B cell (primary cell): ENCODE measurements at regions of chr2 and their contacts with region 1.

Region 1: GRCh38 chr2:25276569-25277465 is 64.9 kb downstream of the DNMT3A start:
- DNase-seq: peak; percentile 89
- ATAC-seq: peak; percentile 35
- H3K4me3 ChIP-seq: peak overlapping the region in 4 of 5 experiments; percentile 46 to 60 (median 56)
- H3K4me3 Mint-ChIP-seq: peak overlapping the region; percentile 79
- H3K27ac ChIP-seq: peak overlapping the region; percentile 94 to 96
- H3K27ac Mint-ChIP-seq: peak overlapping the region; percentile 94
- H3K4me1 ChIP-seq: peaks cover 79 to 92% of the 10 kb centered on the region in 2 donors
- H3K4me1 Mint-ChIP-seq: peaks cover 78% of the 10 kb centered on the region
- H3K27me3 ChIP-seq: no peaks in the 10 kb centered on the region
- H3K27me3 Mint-ChIP-seq: no peaks in the 10 kb centered on the region
- CTCF ChIP-seq: peak; percentile 83

Region 2: DNA sequence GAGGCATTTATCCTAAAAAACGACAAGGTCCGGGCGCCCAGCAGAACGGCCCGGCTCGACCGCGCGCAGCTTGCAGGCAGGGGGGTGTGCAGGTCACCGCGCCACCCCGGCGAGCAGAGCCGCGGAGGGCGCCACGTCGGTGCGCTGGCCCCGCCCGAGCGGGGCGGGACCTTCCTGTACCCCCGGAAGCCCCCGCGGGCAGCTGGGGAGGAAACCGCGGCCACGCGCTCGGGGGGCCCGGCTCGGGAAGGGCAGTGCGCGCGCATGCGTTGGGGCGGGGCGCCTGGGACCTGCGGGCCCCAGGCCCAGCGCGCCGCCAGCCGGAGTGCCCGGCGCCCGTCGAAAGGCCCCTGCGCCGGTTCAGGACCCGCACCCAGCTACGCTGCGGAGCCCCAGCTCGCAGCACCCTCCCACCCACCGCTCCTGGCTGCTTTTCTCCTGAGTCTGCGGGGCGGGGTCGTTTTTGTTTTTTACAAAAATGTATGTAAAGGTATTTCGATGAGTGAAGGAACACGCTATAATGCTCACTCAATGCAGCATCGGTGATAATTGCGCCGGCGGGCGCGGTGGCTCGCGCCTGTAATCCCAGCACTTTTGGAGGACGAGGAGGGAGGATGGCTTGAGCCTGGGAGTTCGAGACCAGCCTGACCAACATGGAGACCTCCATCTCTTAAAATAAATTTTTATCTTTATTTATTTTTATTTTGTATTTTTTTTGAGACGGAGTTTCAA is 60.7 kb before region 1 on chr2:
- CTCF ChIA-PET with region 1: no interaction called
- POLR2A ChIA-PET with region 1: interaction called, 4 read pairs
- intact Hi-C with region 1: loop called (anchors 2 kb)
- DNase-seq: peak; percentile 90
- ATAC-seq: peak; percentile 94
- H3K4me3 ChIP-seq: peak overlapping the region; percentile 45 to 71 (median 61)
- H3K4me3 Mint-ChIP-seq: peak overlapping the region; percentile 77
- H3K27ac ChIP-seq: peak overlapping the region; percentile 50 to 68
- H3K27ac Mint-ChIP-seq: peak overlapping the region; percentile 83
- H3K4me1 ChIP-seq: peaks cover 8 to 29% of the 10 kb centered on the region in 2 donors
- H3K4me1 Mint-ChIP-seq: peaks cover 30% of the 10 kb centered on the region
- H3K27me3 ChIP-seq: no peaks in the 10 kb centered on the region
- H3K27me3 Mint-ChIP-seq: no peaks in the 10 kb centered on the region
- CTCF ChIP-seq: no peak

Region 3: DNA sequence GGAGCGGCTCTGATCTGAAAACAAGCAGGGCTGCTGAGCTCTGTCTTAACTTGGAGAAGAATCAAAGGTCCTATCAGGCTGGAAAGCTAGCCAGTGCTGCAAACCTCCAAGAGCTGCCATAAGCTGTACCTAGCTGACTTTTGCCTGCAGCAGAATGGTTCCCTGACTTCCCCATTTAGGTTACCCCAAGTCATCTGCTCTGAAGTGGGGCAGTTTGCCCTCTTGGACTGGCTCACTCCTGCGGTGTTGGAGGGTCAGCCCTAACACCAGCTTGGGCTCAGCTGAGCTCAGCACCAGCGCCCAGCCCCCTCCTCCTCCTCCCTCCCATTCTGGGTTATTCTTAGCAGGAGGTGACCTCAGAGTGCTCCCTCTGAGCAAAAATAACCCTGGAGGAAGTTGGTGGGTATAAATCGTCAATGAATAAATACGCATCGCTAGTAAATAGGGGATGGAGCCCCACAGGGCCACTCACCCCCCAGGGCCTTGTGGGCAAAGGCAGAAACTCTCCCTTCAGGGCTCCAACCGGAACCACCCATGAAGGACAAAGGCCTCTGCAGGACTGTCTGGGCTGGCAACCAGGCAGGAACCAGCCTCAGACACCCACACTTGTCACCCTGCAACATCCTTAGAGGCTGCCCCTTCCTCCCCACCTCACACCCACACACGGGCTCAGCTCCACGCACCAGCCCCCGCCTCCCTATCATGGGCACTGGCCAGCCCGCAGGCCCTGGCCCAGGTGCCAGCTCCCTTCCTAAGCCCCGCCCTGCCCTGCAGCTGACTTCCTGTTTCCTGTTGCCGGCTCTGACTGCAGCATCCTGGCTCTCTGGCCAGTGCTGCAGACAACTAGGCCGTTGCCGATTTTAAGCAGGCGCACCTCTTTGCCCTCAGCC is 18.0 kb after region 1 on chr2:
- CTCF ChIA-PET with region 1: interaction called, 11 read pairs
- POLR2A ChIA-PET with region 1: interaction called, 10 read pairs
- intact Hi-C with region 1: loop called (anchors 1 kb)
- DNase-seq: peak; percentile 81
- ATAC-seq: peak; percentile 81
- H3K4me3 ChIP-seq: peak overlapping the region in 4 of 5 experiments; percentile 6 to 45 (median 26)
- H3K4me3 Mint-ChIP-seq: peak overlapping the region; percentile 80
- H3K27ac ChIP-seq: peak overlapping the region; percentile 87 to 91
- H3K27ac Mint-ChIP-seq: peak overlapping the region; percentile 94
- H3K4me1 ChIP-seq: peaks cover 41 to 61% of the 10 kb centered on the region in 2 donors
- H3K4me1 Mint-ChIP-seq: peaks cover 43% of the 10 kb centered on the region
- H3K27me3 ChIP-seq: no peaks in the 10 kb centered on the region
- H3K27me3 Mint-ChIP-seq: no peaks in the 10 kb centered on the region
- CTCF ChIP-seq: no peak

Region 4: DNA sequence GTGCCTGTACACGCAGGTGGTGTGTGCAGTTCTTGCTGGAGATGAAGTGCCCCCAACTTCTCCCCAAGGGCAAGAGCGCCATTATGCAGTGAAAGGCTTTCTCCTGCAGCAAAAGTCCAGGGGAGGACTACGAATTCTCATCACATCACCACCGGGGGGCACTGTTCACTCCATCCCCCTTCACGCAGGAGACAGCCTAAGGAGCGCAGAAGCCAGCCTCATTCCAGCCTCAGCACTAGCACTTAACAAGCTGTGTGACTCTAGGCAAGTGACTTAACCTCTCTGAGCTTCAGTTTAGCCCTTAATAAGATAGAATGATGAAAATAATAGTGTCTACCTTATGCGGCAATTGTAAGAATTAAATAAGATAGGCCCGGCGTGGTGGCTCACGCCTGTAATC is 32.6 kb after region 1 on chr2:
- CTCF ChIA-PET with region 1: interaction called, 13 read pairs
- POLR2A ChIA-PET with region 1: no interaction called
- intact Hi-C with region 1: no loop called
- DNase-seq: peak; percentile 75
- ATAC-seq: peak; percentile 63
- H3K4me3 ChIP-seq: no peak overlapping the region
- H3K4me3 Mint-ChIP-seq: no peak overlapping the region
- H3K27ac ChIP-seq: no peak overlapping the region
- H3K27ac Mint-ChIP-seq: no peak overlapping the region
- H3K4me1 ChIP-seq: peaks cover 5% of the 10 kb centered on the region in 2 donors
- H3K4me1 Mint-ChIP-seq: peaks cover 20% of the 10 kb centered on the region
- H3K27me3 ChIP-seq: no peaks in the 10 kb centered on the region
- H3K27me3 Mint-ChIP-seq: no peaks in the 10 kb centered on the region
- CTCF ChIP-seq: peak; percentile 68

Region 5: GRCh38 chr2:25521665-25522387 is 245.0 kb after region 1 on chr2:
- CTCF ChIA-PET with region 1: interaction called, 3 read pairs
- POLR2A ChIA-PET with region 1: no interaction called
- intact Hi-C with region 1: loop called (anchors 10 kb)
- DNase-seq: peak; percentile 87
- ATAC-seq: peak; percentile 100
- H3K4me3 ChIP-seq: peak overlapping the region in 2 of 5 experiments; percentile 19 to 35
- H3K4me3 Mint-ChIP-seq: peak overlapping the region; percentile 3
- H3K27ac ChIP-seq: no peak overlapping the region
- H3K27ac Mint-ChIP-seq: no peak overlapping the region
- H3K4me1 ChIP-seq: peaks cover 7 to 16% of the 10 kb centered on the region in 2 donors
- H3K4me1 Mint-ChIP-seq: peaks cover 19% of the 10 kb centered on the region
- H3K27me3 ChIP-seq: no peaks in the 10 kb centered on the region
- H3K27me3 Mint-ChIP-seq: no peaks in the 10 kb centered on the region
- CTCF ChIP-seq: peak; percentile 84